A673 (cell line): ENCODE measurements at regions of chr14 and their contacts with region 1.

Region 1: DNA sequence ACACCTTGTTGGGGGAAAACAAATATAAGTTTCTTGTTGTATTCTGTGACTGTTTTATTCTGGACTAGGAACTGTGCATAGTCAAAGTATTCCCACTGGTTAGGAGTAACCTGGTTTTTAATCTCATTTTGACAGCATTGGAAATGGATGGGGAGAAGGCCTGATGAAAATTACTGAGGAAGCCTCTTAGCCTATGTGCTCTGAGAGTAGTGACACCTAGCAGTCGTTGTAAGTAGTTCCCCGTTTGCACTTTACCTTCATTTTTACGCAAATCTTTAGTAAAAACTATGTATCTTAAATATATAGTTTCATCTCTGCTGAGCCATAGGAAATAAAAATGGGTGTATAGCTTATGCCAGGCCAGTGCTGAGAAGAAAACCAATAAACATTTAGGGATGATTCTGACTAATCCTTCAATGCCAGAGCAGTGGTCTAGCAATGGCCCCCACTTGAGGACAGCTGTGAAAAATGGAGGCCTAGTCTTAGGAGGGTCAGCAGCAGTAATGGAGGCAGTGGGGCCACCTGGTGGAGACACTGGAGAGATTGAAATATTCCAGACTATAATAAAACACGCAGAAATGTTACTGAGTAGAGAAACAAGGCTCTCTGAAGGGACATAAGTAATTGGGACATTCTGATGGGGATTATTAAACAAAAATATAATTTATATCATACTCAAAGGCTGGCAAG is 133.2 kb upstream of the NOVA1 start:
- DNase-seq: peak; percentile 54
- H3K4me3 ChIP-seq: no peak overlapping the region
- H3K27ac ChIP-seq: no peak overlapping the region
- H3K4me1 ChIP-seq: no peaks in the 10 kb centered on the region
- H3K27me3 ChIP-seq: no peaks in the 10 kb centered on the region
- CTCF ChIP-seq: peak; percentile 78

Region 2: DNA sequence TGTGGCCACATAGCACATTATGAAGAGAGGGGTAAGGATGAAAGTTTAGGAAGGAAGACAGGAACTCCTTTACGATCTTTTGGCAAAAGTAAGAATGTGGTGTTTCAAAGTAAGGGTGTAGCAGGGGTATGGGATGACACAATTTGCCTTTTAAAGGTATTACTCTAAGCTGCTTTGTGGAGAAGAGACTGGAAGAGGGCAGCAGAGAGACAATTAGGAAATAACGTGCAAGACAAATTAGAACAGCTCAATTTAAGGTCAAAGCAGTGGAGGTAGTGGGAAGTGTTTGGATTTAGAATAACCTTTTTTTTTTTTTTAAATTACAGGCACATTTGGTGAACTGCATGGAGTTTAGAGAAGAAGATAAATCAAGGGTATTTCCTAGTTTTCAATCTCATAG is 475.9 kb before region 1 on chr14:
- CTCF ChIA-PET with region 1: interaction called, 3 read pairs
- POLR2A ChIA-PET with region 1: no interaction called
- intact Hi-C with region 1: loop called (anchors 5 kb)
- DNase-seq: peak; percentile 46
- H3K4me3 ChIP-seq: no peak overlapping the region
- H3K27ac ChIP-seq: no peak overlapping the region
- H3K4me1 ChIP-seq: no peaks in the 10 kb centered on the region
- H3K27me3 ChIP-seq: no peaks in the 10 kb centered on the region
- CTCF ChIP-seq: peak; percentile 54

Region 3: GRCh38 chr14:26401179-26401968 is 329.7 kb before region 1 on chr14:
- CTCF ChIA-PET with region 1: no interaction called
- POLR2A ChIA-PET with region 1: no interaction called
- intact Hi-C with region 1: loop called (anchors 5 kb)
- DNase-seq: no peak
- H3K4me3 ChIP-seq: no peak overlapping the region
- H3K27ac ChIP-seq: no peak overlapping the region
- H3K4me1 ChIP-seq: no peaks in the 10 kb centered on the region
- H3K27me3 ChIP-seq: peaks cover 4% of the 10 kb centered on the region
- CTCF ChIP-seq: no peak

Region 4: DNA sequence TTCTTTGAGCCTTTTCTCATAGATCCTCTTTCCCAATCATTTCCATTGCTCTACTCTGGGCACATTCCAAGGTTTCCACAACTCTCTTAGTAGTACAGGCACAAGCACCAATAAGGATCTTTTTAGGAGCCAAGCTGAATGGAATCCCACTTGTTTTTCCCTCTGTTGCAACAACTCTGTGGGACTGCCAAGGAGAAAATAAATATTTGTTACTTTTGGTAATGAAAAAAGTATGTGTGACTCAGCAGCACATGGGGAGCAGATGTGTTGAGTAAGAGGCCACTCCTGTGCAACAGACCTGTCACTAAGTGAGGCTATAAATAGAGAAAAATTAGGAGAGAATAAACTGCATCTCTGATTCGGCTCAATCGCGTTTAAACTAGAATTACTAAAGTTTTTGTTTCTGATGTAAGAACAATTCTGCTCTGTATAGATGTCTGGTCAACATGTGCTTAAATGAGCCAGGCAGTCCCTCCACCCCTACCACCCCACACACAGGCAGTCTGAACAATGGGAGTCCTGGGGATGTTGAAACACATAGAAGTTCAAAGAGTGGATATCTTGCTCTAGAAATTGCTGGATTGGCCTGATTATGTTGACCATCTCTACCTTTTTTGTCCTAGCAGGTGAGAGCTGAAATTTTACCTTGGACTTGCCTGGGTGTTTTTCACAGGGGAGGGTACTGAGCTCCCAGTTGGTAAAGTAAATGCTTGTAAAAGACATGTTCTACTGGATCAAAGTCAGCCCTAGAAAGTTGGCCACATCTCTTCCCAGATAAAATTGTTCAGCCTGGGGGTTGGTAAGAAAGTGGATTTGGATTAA is 111.1 kb after region 1 on chr14:
- CTCF ChIA-PET with region 1: no interaction called
- POLR2A ChIA-PET with region 1: no interaction called
- intact Hi-C with region 1: no loop called
- DNase-seq: peak; percentile 42
- H3K4me3 ChIP-seq: no peak overlapping the region
- H3K27ac ChIP-seq: no peak overlapping the region
- H3K4me1 ChIP-seq: no peaks in the 10 kb centered on the region
- H3K27me3 ChIP-seq: no peaks in the 10 kb centered on the region
- CTCF ChIP-seq: no peak

Region 5: GRCh38 chr14:26917086-26917485 is 186.0 kb after region 1 on chr14:
- CTCF ChIA-PET with region 1: no interaction called
- POLR2A ChIA-PET with region 1: no interaction called
- intact Hi-C with region 1: loop called (anchors 10 kb)
- DNase-seq: peak; percentile 56
- H3K4me3 ChIP-seq: no peak overlapping the region
- H3K27ac ChIP-seq: no peak overlapping the region
- H3K4me1 ChIP-seq: no peaks in the 10 kb centered on the region
- H3K27me3 ChIP-seq: no peaks in the 10 kb centered on the region
- CTCF ChIP-seq: peak; percentile 58